Esophagus muscularis mucosa (tissue), 4 donors: ENCODE measurements at regions of chr7 and their contacts with region 1.

Region 1: GRCh38 chr7:50304158-50304910 is at the start of gene IKZF1:
- DNase-seq: no peak
- H3K4me3 ChIP-seq: peak within 1 kb of the TSS; percentile 44 to 59 (median 50)
- H3K27ac ChIP-seq: peak within 1 kb of the TSS in 3 of 4 donors; percentile 60 to 61 (median 61)
- H3K4me1 ChIP-seq: peaks cover 0 to 13% (median 9%) of the 10 kb centered on the region in 4 donors
- H3K27me3 ChIP-seq: peaks cover 0 to 58% (median 2%) of the 10 kb centered on the region in 4 donors
- CTCF ChIP-seq: no peak
- EP300 ChIP-seq: no peak
- POLR2A ChIP-seq: no peak
- total RNA-seq, gene IKZF1: 3.6 to 17.7 (median 9.2) TPM

Region 2: GRCh38 chr7:50246551-50246950 is 57.8 kb before region 1 on chr7:
- intact Hi-C with region 1: loop called (anchors 10 kb)
- DNase-seq: no peak
- H3K4me3 ChIP-seq: no peak overlapping the region
- H3K27ac ChIP-seq: no peak overlapping the region
- H3K4me1 ChIP-seq: no peaks in the 10 kb centered on the region
- H3K27me3 ChIP-seq: no peaks in the 10 kb centered on the region
- CTCF ChIP-seq: no peak
- EP300 ChIP-seq: no peak
- POLR2A ChIP-seq: no peak

Region 3: GRCh38 chr7:50446542-50446960 is 142.2 kb after region 1 on chr7:
- intact Hi-C with region 1: no loop called
- DNase-seq: no peak
- H3K4me3 ChIP-seq: no peak overlapping the region
- H3K27ac ChIP-seq: no peak overlapping the region
- H3K4me1 ChIP-seq: peaks cover 13 to 20% (median 15%) of the 10 kb centered on the region in 4 donors
- H3K27me3 ChIP-seq: no peaks in the 10 kb centered on the region
- CTCF ChIP-seq: no peak
- EP300 ChIP-seq: no peak
- POLR2A ChIP-seq: no peak